ENCODE measurements at regions of chr4 and their contacts with region 1.

Region 1: GRCh38 chr4:165131247-165131832 is 18.7 kb upstream of the TMEM192 start:
- DNase-seq: peak; percentile 70
- H3K4me3 ChIP-seq: peak overlapping the region in 1 of 2 experiments; percentile 24; a peak in 1 of 4 replicates
- H3K27ac ChIP-seq: no peak overlapping the region
- H3K4me1 ChIP-seq: no peaks in the 10 kb centered on the region
- H3K27me3 ChIP-seq: no peaks in the 10 kb centered on the region; the same call in 1 of the 2 replicates
- CTCF ChIP-seq: peak; percentile 97
- EP300 ChIP-seq: no peak
- RAD21 ChIP-seq: peak; percentile 94

Region 2: DNA sequence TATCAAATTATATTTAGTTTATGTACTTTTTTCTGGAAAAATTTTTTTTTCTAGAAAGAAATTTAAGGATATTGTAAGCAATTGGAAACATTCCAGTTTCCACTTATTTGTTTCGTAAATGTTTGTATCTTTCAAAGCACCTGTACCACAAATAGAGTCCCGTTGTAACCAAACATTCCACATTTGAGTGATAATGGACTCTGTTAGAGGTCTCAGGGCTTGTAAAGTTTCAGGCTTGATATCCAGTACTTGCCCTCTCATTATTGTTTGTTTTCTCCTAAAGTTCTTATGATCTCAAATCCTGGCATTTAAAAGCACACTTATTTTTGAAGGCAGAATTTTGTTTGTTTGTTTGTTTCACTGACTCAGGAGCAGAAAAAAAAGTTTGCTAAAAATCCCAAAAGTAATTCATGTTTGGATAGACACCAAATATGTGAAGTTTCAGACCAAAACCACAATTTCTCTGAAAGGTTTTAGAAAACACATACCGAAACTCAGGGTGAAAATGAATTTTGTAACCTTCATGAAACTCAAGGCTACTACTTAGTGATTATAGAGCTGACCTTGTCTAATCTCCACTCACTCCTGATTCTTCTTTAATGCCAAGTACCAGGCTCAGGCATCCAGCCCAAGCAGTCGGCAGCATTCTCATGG is 13.0 kb before region 1 on chr4:
- CTCF ChIA-PET with region 1: interaction called, 35 read pairs
- POLR2A ChIA-PET with region 1: no interaction called
- DNase-seq: no peak
- H3K4me3 ChIP-seq: no peak overlapping the region
- H3K27ac ChIP-seq: no peak overlapping the region
- H3K4me1 ChIP-seq: peaks cover 0 to 2% of the 10 kb centered on the region in 2 experiments; a peak in 1 of 4 replicates
- H3K27me3 ChIP-seq: no peaks in the 10 kb centered on the region
- CTCF ChIP-seq: no peak
- EP300 ChIP-seq: no peak
- RAD21 ChIP-seq: no peak

Region 3: DNA sequence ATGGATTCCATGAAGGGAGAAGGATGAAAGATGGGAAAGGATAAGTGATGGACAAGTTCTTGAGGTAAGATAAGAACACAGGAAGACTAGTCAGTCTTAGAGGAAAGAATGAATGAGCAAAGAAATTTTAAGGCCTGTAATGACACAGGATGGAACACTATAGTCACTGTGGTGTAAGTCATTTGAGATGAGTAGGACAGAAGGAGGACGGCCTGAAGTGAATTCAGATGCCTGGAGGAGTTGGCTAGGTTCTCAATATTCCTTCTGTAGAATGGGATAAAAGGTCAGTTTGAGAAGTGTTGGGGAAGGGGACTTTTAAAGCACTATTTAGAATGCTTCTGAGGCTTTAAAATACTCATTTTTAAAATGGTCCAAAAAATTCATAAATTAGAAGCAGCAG is 200.0 kb after region 1 on chr4:
- CTCF ChIA-PET with region 1: interaction called, 10 read pairs
- POLR2A ChIA-PET with region 1: no interaction called
- DNase-seq: no peak
- H3K4me3 ChIP-seq: no peak overlapping the region
- H3K27ac ChIP-seq: no peak overlapping the region
- H3K4me1 ChIP-seq: peaks cover 1 to 15% of the 10 kb centered on the region in 2 experiments; a peak in 3 of 4 replicates
- H3K27me3 ChIP-seq: no peaks in the 10 kb centered on the region
- CTCF ChIP-seq: no peak
- EP300 ChIP-seq: no peak
- RAD21 ChIP-seq: no peak

Region 4: GRCh38 chr4:165355900-165356300 is 224.6 kb after region 1 on chr4:
- CTCF ChIA-PET with region 1: interaction called, 64 read pairs
- POLR2A ChIA-PET with region 1: no interaction called
- DNase-seq: peak; percentile 47
- H3K4me3 ChIP-seq: no peak overlapping the region; a peak in 1 of 4 replicates
- H3K27ac ChIP-seq: no peak overlapping the region
- H3K4me1 ChIP-seq: no peaks in the 10 kb centered on the region
- H3K27me3 ChIP-seq: no peaks in the 10 kb centered on the region
- CTCF ChIP-seq: peak; percentile 56
- EP300 ChIP-seq: no peak
- RAD21 ChIP-seq: peak; percentile 81

Region 5: DNA sequence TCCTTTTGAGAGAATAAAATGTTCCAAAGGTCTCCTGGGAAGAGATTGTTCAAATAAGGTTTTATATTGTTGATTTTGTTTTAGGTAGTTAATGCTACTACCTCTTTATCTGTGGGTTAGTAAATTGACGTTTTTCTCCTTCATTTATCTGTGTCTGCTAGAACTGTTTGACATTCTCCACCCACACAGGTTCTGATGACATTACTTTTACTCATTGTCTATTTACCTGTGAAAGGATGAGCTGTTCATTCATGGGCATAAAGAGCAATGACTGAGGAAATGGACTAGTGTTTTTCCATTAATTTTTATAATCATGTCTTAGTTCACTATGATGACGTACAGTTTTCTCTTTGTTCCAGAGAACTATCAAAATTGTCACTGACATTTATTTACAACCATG is 323.1 kb after region 1 on chr4:
- CTCF ChIA-PET with region 1: interaction called, 38 read pairs
- POLR2A ChIA-PET with region 1: no interaction called
- DNase-seq: no peak
- H3K4me3 ChIP-seq: no peak overlapping the region
- H3K27ac ChIP-seq: no peak overlapping the region
- H3K4me1 ChIP-seq: no peaks in the 10 kb centered on the region; a peak in 2 of 4 replicates
- H3K27me3 ChIP-seq: no peaks in the 10 kb centered on the region
- CTCF ChIP-seq: no peak
- EP300 ChIP-seq: no peak
- RAD21 ChIP-seq: no peak

Region 6: GRCh38 chr4:165472943-165473676 is 341.8 kb after region 1 on chr4:
- CTCF ChIA-PET with region 1: interaction called, 15 read pairs
- POLR2A ChIA-PET with region 1: no interaction called
- DNase-seq: no peak
- H3K4me3 ChIP-seq: no peak overlapping the region
- H3K27ac ChIP-seq: no peak overlapping the region
- H3K4me1 ChIP-seq: no peaks in the 10 kb centered on the region
- H3K27me3 ChIP-seq: no peaks in the 10 kb centered on the region
- CTCF ChIP-seq: no peak
- EP300 ChIP-seq: no peak
- RAD21 ChIP-seq: no peak

Measured in SK-N-SH (cell line).